Posterior vena cava (tissue), 2 donors: ENCODE measurements at regions of chr4 and their contacts with region 1.

Region 1: GRCh38 chr4:156705311-156705710 is 266.3 kb downstream of the PDGFC start:
- DNase-seq: no peak

Region 2: GRCh38 chr4:156771171-156771837 is 66.0 kb after region 1 on chr4:
- intact Hi-C with region 1: no loop called
- DNase-seq: no peak

Region 3: GRCh38 chr4:157664726-157665125 is 959.4 kb after region 1 on chr4:
- intact Hi-C with region 1: loop called in 1 of 2 experiments (anchors 5 kb)
- DNase-seq: no peak